Adrenal gland (tissue), 19 donors: ENCODE measurements at regions of chr5 and their contacts with region 1.

Region 1: GRCh38 chr5:172714491-172715421 is 56.2 kb downstream of the DUSP1 start:
- DNase-seq: peak; percentile 81 to 95 (median 91)
- H3K4me3 ChIP-seq: no peak overlapping the region
- H3K27ac ChIP-seq: peak overlapping the region; percentile 8 to 88 (median 59)
- H3K4me1 ChIP-seq: peaks cover 0 to 32% of the 10 kb centered on the region in 2 donors
- H3K27me3 ChIP-seq: no peaks in the 10 kb centered on the region
- CTCF ChIP-seq: peak; percentile 83 to 94 (median 87)
- POLR2A ChIP-seq: no peak

Region 2: GRCh38 chr5:172764849-172765765 is 50.4 kb after region 1 on chr5:
- intact Hi-C with region 1: loop called (anchors 5 kb)
- DNase-seq: peak; percentile 96 to 100 (median 98)
- H3K4me3 ChIP-seq: peak overlapping the region in 2 of 4 donors; percentile 5 to 90
- H3K27ac ChIP-seq: peak overlapping the region; percentile 99 to 100 (median 99)
- H3K4me1 ChIP-seq: peaks cover 32 to 49% of the 10 kb centered on the region in 2 donors
- H3K27me3 ChIP-seq: no peaks in the 10 kb centered on the region
- CTCF ChIP-seq: peak in 3 of 6 experiments; percentile 16 to 35 (median 32)
- POLR2A ChIP-seq: peak in 1 of 2 donors; percentile 46

Region 3: GRCh38 chr5:172932313-172933017 is 217.7 kb after region 1 on chr5:
- intact Hi-C with region 1: loop called (anchors 2 kb)
- DNase-seq: peak; percentile 71 to 91 (median 83)
- H3K4me3 ChIP-seq: no peak overlapping the region
- H3K27ac ChIP-seq: peak overlapping the region in 3 of 5 donors; percentile 64 to 88 (median 68)
- H3K4me1 ChIP-seq: peaks cover 0 to 18% of the 10 kb centered on the region in 2 donors
- H3K27me3 ChIP-seq: no peaks in the 10 kb centered on the region
- CTCF ChIP-seq: peak; percentile 90 to 98 (median 96)
- POLR2A ChIP-seq: peak in 1 of 2 donors; percentile 30